Right cardiac atrium (tissue), 5 donors: ENCODE measurements at regions of chr7 and their contacts with region 1.

Region 1: DNA sequence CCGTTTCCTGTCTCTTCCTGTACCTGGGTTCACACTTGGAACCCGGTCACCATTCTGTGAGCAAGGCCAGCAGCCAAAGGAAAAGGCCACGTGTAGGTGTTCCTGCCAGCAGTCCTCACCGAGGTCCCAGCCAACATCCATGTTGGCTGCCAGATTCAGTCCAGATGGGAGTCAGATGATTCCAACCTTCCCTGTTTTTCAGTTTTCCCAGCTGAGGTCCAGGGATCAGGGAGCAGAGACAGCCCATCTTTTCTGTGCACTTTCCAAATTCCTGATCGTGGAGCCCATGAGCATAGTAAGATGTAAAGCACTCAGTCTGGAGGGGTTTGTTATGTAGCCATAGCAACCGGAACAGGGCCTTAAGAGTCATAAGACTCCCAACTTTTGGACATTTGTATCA is 3.9 kb upstream of the PVRIG start:
- DNase-seq: peak in 1 of 3 donors; percentile 68
- ATAC-seq: no peak
- H3K4me3 ChIP-seq: no peak overlapping the region
- H3K27ac ChIP-seq: no peak overlapping the region
- H3K4me1 ChIP-seq: peaks cover 3% of the 10 kb centered on the region
- H3K27me3 ChIP-seq: no peaks in the 10 kb centered on the region

Region 2: DNA sequence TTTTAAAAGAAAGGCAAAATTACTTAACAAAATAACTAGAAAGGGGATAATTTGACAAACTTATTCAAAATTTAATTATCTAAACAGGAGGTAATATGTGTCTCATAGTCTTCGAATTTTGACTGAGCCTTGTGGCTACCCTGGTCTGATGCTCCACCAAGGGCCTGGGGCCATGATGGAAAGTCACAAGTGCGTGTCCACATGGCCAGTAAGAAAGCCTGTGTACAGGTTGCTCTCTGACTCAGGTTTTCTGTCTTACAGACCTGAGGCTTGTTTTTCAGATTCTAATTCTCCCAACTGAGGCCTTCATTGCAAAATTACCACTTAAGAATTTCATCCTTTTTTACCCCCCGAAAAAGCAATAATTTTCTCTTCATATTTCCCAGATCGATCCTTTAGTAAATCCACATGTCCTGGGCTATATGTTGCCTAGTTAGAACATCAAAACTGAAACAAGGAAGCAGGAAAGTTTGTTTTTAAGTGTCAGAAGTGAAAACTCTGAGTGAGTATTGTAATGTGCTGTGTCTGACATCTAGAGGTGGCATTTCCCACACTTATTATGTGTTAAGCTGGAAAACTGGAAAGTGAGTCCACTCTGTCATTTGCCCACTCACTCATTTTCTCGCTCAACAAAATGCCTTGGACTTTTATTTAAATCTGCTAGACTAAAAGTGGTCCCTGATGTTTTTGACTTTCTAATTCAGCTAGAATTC is 378.1 kb before region 1 on chr7:
- intact Hi-C with region 1: no loop called
- DNase-seq: no peak
- ATAC-seq: no peak
- H3K4me3 ChIP-seq: no peak overlapping the region
- H3K27ac ChIP-seq: no peak overlapping the region
- H3K4me1 ChIP-seq: no peaks in the 10 kb centered on the region
- H3K27me3 ChIP-seq: no peaks in the 10 kb centered on the region

Region 3: DNA sequence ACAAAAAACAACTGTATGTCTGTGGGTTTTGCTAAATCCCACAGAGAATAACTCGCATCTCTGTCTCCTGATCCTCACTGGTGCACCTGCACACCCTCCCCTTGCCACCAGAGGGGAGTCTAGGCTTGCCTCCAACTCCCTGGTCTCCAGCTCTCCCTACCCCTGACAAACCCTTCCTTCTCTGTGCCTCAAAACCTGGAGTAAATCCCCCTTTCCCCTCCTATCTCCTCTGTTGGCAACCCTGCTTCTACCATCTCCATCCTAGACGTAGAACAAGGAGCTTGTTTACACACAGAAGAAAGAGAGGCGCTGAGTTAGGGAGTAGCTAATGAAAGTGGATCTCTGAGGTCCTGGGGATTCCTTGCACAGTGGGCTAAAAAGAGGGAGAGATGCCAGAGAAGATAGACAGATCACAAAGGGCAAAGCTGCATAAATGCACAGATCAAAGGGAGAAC is 83.2 kb before region 1 on chr7:
- intact Hi-C with region 1: loop called in 2 of 4 experiments (anchors 5 kb)
- DNase-seq: peak in 2 of 3 donors; percentile 49 to 78
- ATAC-seq: peak; percentile 65 to 81
- H3K4me3 ChIP-seq: no peak overlapping the region
- H3K27ac ChIP-seq: no peak overlapping the region
- H3K4me1 ChIP-seq: no peaks in the 10 kb centered on the region
- H3K27me3 ChIP-seq: no peaks in the 10 kb centered on the region

Region 4: DNA sequence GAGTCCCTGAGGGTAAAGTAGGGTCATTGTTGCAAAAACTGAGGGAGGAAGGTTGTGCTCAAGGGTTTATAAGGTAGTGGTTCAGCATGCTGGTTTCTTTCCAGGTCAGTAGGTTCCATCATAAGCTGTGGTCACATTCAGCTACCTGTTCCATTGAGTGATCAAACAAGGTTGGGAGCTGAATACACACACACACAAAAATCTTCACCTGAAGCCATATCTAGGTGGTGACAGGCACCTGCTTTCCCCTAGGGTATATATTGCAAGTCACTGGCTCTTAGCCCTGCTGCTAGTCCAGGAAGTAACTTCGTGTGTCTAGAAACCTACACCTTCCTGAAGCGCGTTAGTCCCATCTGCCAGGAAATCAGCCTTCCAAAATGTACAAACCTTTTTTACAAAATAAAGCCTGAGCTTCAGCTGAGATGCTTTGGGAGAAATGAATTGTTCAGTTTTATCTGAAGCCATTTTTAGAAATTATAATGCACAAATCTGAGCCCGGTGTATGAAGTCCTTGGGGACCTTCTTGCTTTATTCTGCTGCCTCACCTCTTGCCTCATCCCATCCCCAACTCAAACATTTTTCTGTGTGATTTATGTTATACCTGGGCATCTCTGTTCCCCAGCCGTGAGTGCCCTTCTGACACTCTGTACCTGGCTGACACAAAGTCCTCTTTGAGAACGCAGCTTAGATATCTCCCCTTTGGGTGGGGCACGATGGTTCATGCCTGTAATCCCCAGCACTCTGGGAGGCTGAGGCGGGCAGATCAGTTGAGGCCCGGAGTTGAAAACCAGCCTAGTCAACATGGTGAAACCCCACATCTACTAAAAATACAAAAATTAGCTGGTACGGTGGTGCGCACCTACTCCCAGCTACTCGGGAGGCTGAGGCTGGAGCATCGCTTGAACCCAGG is 77.8 kb before region 1 on chr7:
- intact Hi-C with region 1: loop called in 2 of 4 experiments (anchors 5 kb)
- DNase-seq: no peak
- ATAC-seq: no peak
- H3K4me3 ChIP-seq: no peak overlapping the region
- H3K27ac ChIP-seq: no peak overlapping the region
- H3K4me1 ChIP-seq: no peaks in the 10 kb centered on the region
- H3K27me3 ChIP-seq: no peaks in the 10 kb centered on the region